Naive thymus-derived CD4-positive, alpha-beta T cell (primary cell): ENCODE measurements at regions of chr10 and their contacts with region 1.

Region 1: GRCh38 chr10:11724938-11725776 is 17.0 kb upstream of the ECHDC3 start:
- DNase-seq: peak in 7 of 9 donors; percentile 25 to 61 (median 55)
- ATAC-seq: peak; percentile 81
- H3K4me3 ChIP-seq: no peak overlapping the region
- H3K4me3 Mint-ChIP-seq: peak overlapping the region in 1 of 10 donors; percentile 44
- H3K27ac ChIP-seq: no peak overlapping the region
- H3K27ac Mint-ChIP-seq: peak overlapping the region in 1 of 9 donors; percentile 13
- H3K4me1 ChIP-seq: no peaks in the 10 kb centered on the region
- H3K4me1 Mint-ChIP-seq: peaks cover 0 to 8% (median 5%) of the 10 kb centered on the region in 7 donors
- H3K27me3 ChIP-seq: no peaks in the 10 kb centered on the region
- H3K27me3 Mint-ChIP-seq: peaks cover 0 to 43% (median 5%) of the 10 kb centered on the region in 5 donors

Region 2: GRCh38 chr10:11147722-11148121 is 577.4 kb before region 1 on chr10:
- CTCF ChIA-PET with region 1: no interaction called
- POLR2A ChIA-PET with region 1: no interaction called
- intact Hi-C with region 1: no loop called
- DNase-seq: peak in 1 of 9 donors; percentile 24
- ATAC-seq: no peak
- H3K4me3 ChIP-seq: peak overlapping the region; percentile 19
- H3K4me3 Mint-ChIP-seq: peak overlapping the region; percentile 70 to 89 (median 84)
- H3K27ac ChIP-seq: peak overlapping the region; percentile 94
- H3K27ac Mint-ChIP-seq: peak overlapping the region; percentile 97 to 99 (median 99)
- H3K4me1 ChIP-seq: peaks cover 96 to 99% of the 10 kb centered on the region in 2 donors
- H3K4me1 Mint-ChIP-seq: peaks cover 81 to 100% (median 96%) of the 10 kb centered on the region in 7 donors
- H3K27me3 ChIP-seq: no peaks in the 10 kb centered on the region
- H3K27me3 Mint-ChIP-seq: no peaks in the 10 kb centered on the region

Region 3: DNA sequence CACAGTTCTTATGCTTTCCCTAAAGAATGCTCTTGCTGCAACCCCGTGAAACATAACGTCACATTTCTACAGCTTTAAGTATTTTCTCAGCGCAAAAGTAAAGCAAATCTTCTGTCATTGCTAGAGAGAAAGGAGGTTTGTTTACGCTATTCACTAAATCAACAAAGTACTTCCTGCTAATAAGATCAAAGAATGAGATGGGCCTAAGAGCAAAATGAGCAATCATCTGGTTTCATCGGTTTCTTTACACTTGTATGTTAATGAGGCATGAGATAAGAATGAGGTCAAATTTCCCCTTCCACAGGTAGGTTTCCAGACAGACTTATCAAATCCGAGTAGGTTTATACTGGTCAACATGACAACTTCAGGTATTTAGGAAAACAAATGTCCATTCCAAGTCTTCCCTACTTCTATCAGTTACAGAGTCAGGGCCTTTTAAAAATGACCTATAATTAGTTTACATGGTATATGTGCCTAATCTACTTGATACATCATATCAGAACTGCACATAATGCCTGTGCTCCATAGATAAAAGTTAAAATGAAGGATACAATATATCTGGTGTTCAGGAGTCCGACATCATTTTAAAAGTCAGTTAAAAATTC is 122.1 kb before region 1 on chr10:
- CTCF ChIA-PET with region 1: interaction called, 4 read pairs
- POLR2A ChIA-PET with region 1: no interaction called
- intact Hi-C with region 1: loop called in 1 of 2 experiments (anchors 2 kb)
- DNase-seq: no peak
- ATAC-seq: no peak
- H3K4me3 ChIP-seq: no peak overlapping the region
- H3K4me3 Mint-ChIP-seq: peak overlapping the region in 2 of 10 donors; percentile 15 to 73
- H3K27ac ChIP-seq: no peak overlapping the region
- H3K27ac Mint-ChIP-seq: peak overlapping the region in 3 of 9 donors; percentile 69 to 93 (median 72)
- H3K4me1 ChIP-seq: peaks cover 0 to 13% of the 10 kb centered on the region in 2 donors
- H3K4me1 Mint-ChIP-seq: peaks cover 14 to 57% (median 37%) of the 10 kb centered on the region in 7 donors
- H3K27me3 ChIP-seq: no peaks in the 10 kb centered on the region
- H3K27me3 Mint-ChIP-seq: peaks cover 0 to 7% (median 0%) of the 10 kb centered on the region in 5 donors

Region 4: GRCh38 chr10:11631890-11632587 is 93.1 kb before region 1 on chr10:
- CTCF ChIA-PET with region 1: no interaction called
- POLR2A ChIA-PET with region 1: no interaction called
- intact Hi-C with region 1: loop called in 1 of 2 experiments (anchors 5 kb)
- DNase-seq: peak in 7 of 9 donors; percentile 22 to 52 (median 37)
- ATAC-seq: peak; percentile 81
- H3K4me3 ChIP-seq: peak overlapping the region; percentile 9
- H3K4me3 Mint-ChIP-seq: peak overlapping the region; percentile 2 to 85 (median 62)
- H3K27ac ChIP-seq: no peak overlapping the region
- H3K27ac Mint-ChIP-seq: peak overlapping the region in 7 of 9 donors; percentile 64 to 80 (median 72)
- H3K4me1 ChIP-seq: peaks cover 0 to 7% of the 10 kb centered on the region in 2 donors
- H3K4me1 Mint-ChIP-seq: peaks cover 0 to 23% (median 17%) of the 10 kb centered on the region in 7 donors
- H3K27me3 ChIP-seq: no peaks in the 10 kb centered on the region
- H3K27me3 Mint-ChIP-seq: peaks cover 0 to 57% (median 0%) of the 10 kb centered on the region in 5 donors

Region 5: DNA sequence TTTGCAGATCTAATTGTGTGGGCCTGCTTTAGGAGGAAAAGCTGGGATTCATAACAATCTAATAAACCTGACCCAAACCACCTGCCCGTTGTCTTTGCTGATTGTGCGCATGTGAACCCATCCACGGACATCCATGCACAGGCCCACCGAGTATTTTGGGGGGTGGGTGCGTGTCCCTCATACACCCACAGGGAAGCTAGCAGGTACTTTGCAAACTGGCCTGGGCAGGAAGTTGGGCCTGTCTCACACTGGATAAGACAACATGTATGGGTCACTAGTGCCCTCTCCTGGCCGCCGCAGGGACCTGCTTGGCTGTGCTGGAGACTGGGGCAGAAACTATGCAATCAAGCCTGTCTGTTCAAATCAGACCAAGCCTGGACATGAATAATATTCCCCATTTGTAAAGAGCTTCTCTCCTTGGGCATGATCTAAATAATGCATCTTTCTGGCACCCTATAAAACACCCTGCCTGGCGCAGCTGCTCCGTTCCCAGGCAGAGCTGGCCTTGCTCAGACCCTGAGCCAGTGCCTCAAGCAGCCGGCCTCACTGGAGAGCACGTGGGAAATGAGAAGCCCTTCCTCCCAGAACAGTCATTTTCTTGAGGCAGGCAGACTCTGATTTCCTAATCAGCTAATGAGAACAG is 32.8 kb after region 1 on chr10:
- CTCF ChIA-PET with region 1: interaction called, 29 read pairs
- POLR2A ChIA-PET with region 1: no interaction called
- intact Hi-C with region 1: loop called (anchors 1 to 2 kb)
- DNase-seq: peak; percentile 66 to 86 (median 79)
- ATAC-seq: peak; percentile 95
- H3K4me3 ChIP-seq: no peak overlapping the region
- H3K4me3 Mint-ChIP-seq: no peak overlapping the region
- H3K27ac ChIP-seq: no peak overlapping the region
- H3K27ac Mint-ChIP-seq: peak overlapping the region in 4 of 9 donors; percentile 26 to 77 (median 54)
- H3K4me1 ChIP-seq: peaks cover 0 to 6% of the 10 kb centered on the region in 2 donors
- H3K4me1 Mint-ChIP-seq: peaks cover 4 to 6% (median 5%) of the 10 kb centered on the region in 7 donors
- H3K27me3 ChIP-seq: no peaks in the 10 kb centered on the region
- H3K27me3 Mint-ChIP-seq: peaks cover 0 to 8% (median 0%) of the 10 kb centered on the region in 5 donors